ENCODE measurements at regions of chr14 and their contacts with region 1.

Region 1: GRCh38 chr14:30982533-30982932 is 42.9 kb upstream of the AP4S1 start:
- DNase-seq: no peak
- H3K4me3 ChIP-seq: no peak overlapping the region
- H3K27ac ChIP-seq: no peak overlapping the region
- H3K4me1 ChIP-seq: peaks cover 0 to 16% (median 0%) of the 10 kb centered on the region in 3 donors
- H3K27me3 ChIP-seq: no peaks in the 10 kb centered on the region
- CTCF ChIP-seq: no peak
- POLR2A ChIP-seq: no peak

Region 2: GRCh38 chr14:30885840-30886740 is 96.4 kb before region 1 on chr14:
- intact Hi-C with region 1: no loop called
- DNase-seq: no peak
- H3K4me3 ChIP-seq: no peak overlapping the region
- H3K27ac ChIP-seq: no peak overlapping the region
- H3K4me1 ChIP-seq: no peaks in the 10 kb centered on the region
- H3K27me3 ChIP-seq: no peaks in the 10 kb centered on the region
- CTCF ChIP-seq: no peak
- POLR2A ChIP-seq: no peak

Region 3: GRCh38 chr14:31084385-31084784 is 101.9 kb after region 1 on chr14:
- intact Hi-C with region 1: loop called (anchors 5 kb)
- DNase-seq: no peak
- H3K4me3 ChIP-seq: no peak overlapping the region
- H3K27ac ChIP-seq: no peak overlapping the region
- H3K4me1 ChIP-seq: peaks cover 0 to 8% (median 4%) of the 10 kb centered on the region in 3 donors
- H3K27me3 ChIP-seq: no peaks in the 10 kb centered on the region
- CTCF ChIP-seq: no peak
- POLR2A ChIP-seq: no peak

Region 4: DNA sequence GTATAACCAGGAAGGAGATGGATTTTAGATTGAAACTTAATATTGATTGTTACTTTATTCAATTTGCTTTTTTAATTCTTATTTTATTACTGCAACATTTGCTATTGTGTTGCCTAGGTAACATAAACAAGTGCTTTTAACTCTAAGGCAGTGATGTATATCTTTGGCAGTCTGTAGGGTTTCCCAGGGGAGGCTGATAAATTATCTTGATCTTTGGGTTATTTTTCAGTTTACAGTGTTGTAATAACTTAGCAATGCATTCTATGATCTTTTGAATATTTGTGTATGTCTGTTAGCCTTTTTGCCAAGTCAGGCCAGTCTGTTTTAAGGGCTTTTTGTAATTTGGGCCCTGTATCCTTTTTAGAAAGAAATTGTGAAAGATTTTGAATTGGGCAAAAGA is 482.6 kb after region 1 on chr14:
- intact Hi-C with region 1: no loop called
- DNase-seq: no peak
- H3K4me3 ChIP-seq: no peak overlapping the region
- H3K27ac ChIP-seq: no peak overlapping the region
- H3K4me1 ChIP-seq: peaks cover 0 to 16% (median 4%) of the 10 kb centered on the region in 3 donors
- H3K27me3 ChIP-seq: no peaks in the 10 kb centered on the region
- CTCF ChIP-seq: no peak
- POLR2A ChIP-seq: no peak